Common myeloid progenitor, CD34-positive (primary cell): ENCODE measurements at regions of chr1 and their contacts with region 1.

Region 1: DNA sequence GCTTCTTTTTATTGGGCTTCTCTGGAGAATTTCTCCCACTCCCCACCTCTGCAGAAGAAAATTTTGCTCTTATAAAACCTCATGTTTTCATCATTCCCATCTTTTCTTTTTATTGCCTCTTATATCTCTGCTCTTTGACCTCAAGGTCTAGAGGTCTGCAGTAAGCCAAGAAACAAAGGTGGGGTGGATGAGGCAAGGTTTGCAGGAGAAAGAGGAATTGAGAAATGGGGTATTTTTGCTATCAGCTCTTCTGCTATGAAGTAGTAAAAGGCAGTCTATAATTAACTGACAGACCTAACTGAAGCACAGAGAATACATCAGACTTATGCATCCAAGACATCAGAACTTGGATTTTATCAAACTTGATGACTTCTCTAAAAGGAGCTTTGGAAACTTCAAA is 22.9 kb downstream of the SYT11 start:
- DNase-seq: no peak
- H3K4me3 ChIP-seq: no peak overlapping the region
- H3K27ac ChIP-seq: no peak overlapping the region
- H3K4me1 ChIP-seq: no peaks in the 10 kb centered on the region
- H3K27me3 ChIP-seq: no peaks in the 10 kb centered on the region

Region 2: DNA sequence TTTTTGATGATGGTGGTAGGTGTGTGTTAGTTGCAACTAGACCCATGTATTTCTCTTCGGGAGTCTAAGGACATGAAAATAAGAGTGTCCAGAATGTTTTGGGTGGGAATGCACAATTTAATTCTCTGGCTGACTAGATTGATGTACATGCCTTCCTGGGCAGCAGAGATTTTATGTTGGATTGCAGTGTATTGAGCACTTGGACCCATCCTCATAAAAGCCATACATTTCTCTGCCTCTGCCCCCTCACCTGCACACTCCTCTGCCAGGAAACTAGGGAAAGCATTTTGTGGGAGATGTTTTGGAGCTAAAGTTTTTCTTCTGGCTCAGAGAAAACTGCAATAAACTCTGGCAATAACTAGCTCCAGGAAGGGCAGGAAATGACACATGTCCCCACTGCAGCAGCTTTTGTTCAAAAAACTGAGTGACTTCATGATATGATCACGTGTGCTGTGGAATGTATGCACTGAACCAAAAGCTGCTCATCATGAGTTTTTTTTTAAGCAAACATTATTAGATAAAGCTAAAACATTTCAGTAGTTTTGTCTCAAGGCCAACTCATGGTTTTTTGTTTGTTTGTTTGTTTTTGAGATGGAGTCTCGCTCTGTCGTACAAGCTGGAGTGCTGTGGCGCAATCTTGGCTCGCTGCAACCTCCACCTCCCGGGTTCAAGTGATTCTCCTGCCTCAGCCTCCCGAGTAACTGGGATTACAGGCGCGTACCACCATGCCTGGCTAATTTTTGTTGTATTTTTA is 11.3 kb after region 1 on chr1:
- CTCF ChIA-PET with region 1: interaction called, 13 read pairs
- POLR2A ChIA-PET with region 1: no interaction called
- DNase-seq: peak; percentile 59 to 83 (median 75)
- H3K4me3 ChIP-seq: peak overlapping the region in 2 of 7 experiments; percentile 3 to 16
- H3K27ac ChIP-seq: peak overlapping the region; percentile 21 to 50
- H3K4me1 ChIP-seq: peaks cover 6 to 12% (median 10%) of the 10 kb centered on the region in 4 experiments
- H3K27me3 ChIP-seq: no peaks in the 10 kb centered on the region

Region 3: GRCh38 chr1:155931332-155932038 is 49.2 kb after region 1 on chr1:
- CTCF ChIA-PET with region 1: no interaction called
- POLR2A ChIA-PET with region 1: no interaction called
- DNase-seq: no peak
- H3K4me3 ChIP-seq: peak overlapping the region in 3 of 7 experiments; percentile 8 to 39 (median 14)
- H3K27ac ChIP-seq: peak overlapping the region in 1 of 2 experiments; percentile 99
- H3K4me1 ChIP-seq: peaks cover 4 to 34% (median 28%) of the 10 kb centered on the region in 4 experiments
- H3K27me3 ChIP-seq: no peaks in the 10 kb centered on the region